Panc1 (cell line): ENCODE measurements at regions of chr11 and their contacts with region 1.

Region 1: GRCh38 chr11:126480410-126481302 is 125.2 kb downstream of the ST3GAL4 start:
- DNase-seq: peak; percentile 59
- ATAC-seq: peak; percentile 91
- H3K4me3 ChIP-seq: peak overlapping the region in 1 of 2 experiments; percentile 32; a peak in 3 of 4 replicates
- H3K27ac ChIP-seq: peak overlapping the region; percentile 85
- H3K4me1 ChIP-seq: peaks cover 3% of the 10 kb centered on the region; the same call in 1 of the 2 replicates
- H3K27me3 ChIP-seq: no peaks in the 10 kb centered on the region
- CTCF ChIP-seq: peak; percentile 98

Region 2: GRCh38 chr11:126310228-126310991 is 170.2 kb before region 1 on chr11:
- CTCF ChIA-PET with region 1: interaction called, 27 read pairs
- POLR2A ChIA-PET with region 1: no interaction called
- in situ Hi-C with region 1: no loop called
- intact Hi-C with region 1: loop called (anchors 1 kb)
- DNase-seq: no peak
- ATAC-seq: peak; percentile 97
- H3K4me3 ChIP-seq: no peak overlapping the region
- H3K27ac ChIP-seq: no peak overlapping the region
- H3K4me1 ChIP-seq: no peaks in the 10 kb centered on the region
- H3K27me3 ChIP-seq: no peaks in the 10 kb centered on the region
- CTCF ChIP-seq: peak; percentile 94

Region 3: GRCh38 chr11:126465573-126466188 is 15.0 kb before region 1 on chr11:
- CTCF ChIA-PET with region 1: interaction called, 10 read pairs
- POLR2A ChIA-PET with region 1: no interaction called
- in situ Hi-C with region 1: no loop called
- intact Hi-C with region 1: no loop called
- DNase-seq: no peak
- ATAC-seq: no peak
- H3K4me3 ChIP-seq: no peak overlapping the region
- H3K27ac ChIP-seq: no peak overlapping the region
- H3K4me1 ChIP-seq: no peaks in the 10 kb centered on the region
- H3K27me3 ChIP-seq: peaks cover 7% of the 10 kb centered on the region; the same call in 1 of the 2 replicates
- CTCF ChIP-seq: no peak

Region 4: GRCh38 chr11:126989942-126990715 is 509.5 kb after region 1 on chr11:
- CTCF ChIA-PET with region 1: interaction called, 4 read pairs
- POLR2A ChIA-PET with region 1: no interaction called
- in situ Hi-C with region 1: no loop called
- intact Hi-C with region 1: loop called (anchors 5 kb)
- DNase-seq: peak; percentile 39
- ATAC-seq: peak; percentile 92
- H3K4me3 ChIP-seq: no peak overlapping the region
- H3K27ac ChIP-seq: no peak overlapping the region
- H3K4me1 ChIP-seq: no peaks in the 10 kb centered on the region
- H3K27me3 ChIP-seq: peaks cover 27% of the 10 kb centered on the region
- CTCF ChIP-seq: peak; percentile 99

Region 5: DNA sequence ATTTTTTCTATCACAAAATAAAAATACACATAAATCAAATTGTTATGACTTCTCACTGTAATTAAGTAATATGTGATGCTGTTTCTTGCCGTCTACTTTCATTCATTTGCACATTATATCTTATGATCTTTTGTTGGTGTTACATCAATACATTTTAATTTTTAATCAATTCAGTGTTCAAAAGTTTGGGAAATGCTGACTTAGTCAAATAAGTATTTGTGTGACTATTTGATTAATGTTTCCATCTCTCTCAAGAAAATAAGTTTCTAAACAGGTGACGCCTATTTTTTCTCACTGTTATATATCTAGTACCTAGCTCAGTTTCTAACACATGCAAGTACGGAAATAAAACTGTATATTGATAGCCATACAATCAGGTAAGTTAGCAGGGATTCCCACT is 849.4 kb after region 1 on chr11:
- CTCF ChIA-PET with region 1: no interaction called
- POLR2A ChIA-PET with region 1: no interaction called
- in situ Hi-C with region 1: no loop called
- intact Hi-C with region 1: no loop called
- DNase-seq: no peak
- ATAC-seq: no peak
- H3K4me3 ChIP-seq: no peak overlapping the region
- H3K27ac ChIP-seq: no peak overlapping the region
- H3K4me1 ChIP-seq: no peaks in the 10 kb centered on the region
- H3K27me3 ChIP-seq: no peaks in the 10 kb centered on the region
- CTCF ChIP-seq: no peak